ENCODE measurements at regions of chr2 and their contacts with region 1.

Region 1: GRCh38 chr2:131105156-131105949 is at the start of gene PLEKHB2:
- DNase-seq: peak; percentile 88 to 99 (median 94)
- ATAC-seq: peak; percentile 81
- H3K4me3 ChIP-seq: peak within 1 kb of the TSS; percentile 95
- H3K4me3 Mint-ChIP-seq: peak within 1 kb of the TSS; percentile 93 to 98 (median 96)
- H3K27ac ChIP-seq: peak within 1 kb of the TSS; percentile 98
- H3K27ac Mint-ChIP-seq: peak within 1 kb of the TSS; percentile 93 to 99 (median 96)
- H3K4me1 ChIP-seq: peaks cover 15 to 22% of the 10 kb centered on the region in 2 donors
- H3K4me1 Mint-ChIP-seq: peaks cover 31 to 70% (median 52%) of the 10 kb centered on the region in 7 donors
- H3K27me3 ChIP-seq: no peaks in the 10 kb centered on the region
- H3K27me3 Mint-ChIP-seq: no peaks in the 10 kb centered on the region
- total RNA-seq, gene PLEKHB2: 43.1 to 92.3 (median 55.8) TPM

Region 2: DNA sequence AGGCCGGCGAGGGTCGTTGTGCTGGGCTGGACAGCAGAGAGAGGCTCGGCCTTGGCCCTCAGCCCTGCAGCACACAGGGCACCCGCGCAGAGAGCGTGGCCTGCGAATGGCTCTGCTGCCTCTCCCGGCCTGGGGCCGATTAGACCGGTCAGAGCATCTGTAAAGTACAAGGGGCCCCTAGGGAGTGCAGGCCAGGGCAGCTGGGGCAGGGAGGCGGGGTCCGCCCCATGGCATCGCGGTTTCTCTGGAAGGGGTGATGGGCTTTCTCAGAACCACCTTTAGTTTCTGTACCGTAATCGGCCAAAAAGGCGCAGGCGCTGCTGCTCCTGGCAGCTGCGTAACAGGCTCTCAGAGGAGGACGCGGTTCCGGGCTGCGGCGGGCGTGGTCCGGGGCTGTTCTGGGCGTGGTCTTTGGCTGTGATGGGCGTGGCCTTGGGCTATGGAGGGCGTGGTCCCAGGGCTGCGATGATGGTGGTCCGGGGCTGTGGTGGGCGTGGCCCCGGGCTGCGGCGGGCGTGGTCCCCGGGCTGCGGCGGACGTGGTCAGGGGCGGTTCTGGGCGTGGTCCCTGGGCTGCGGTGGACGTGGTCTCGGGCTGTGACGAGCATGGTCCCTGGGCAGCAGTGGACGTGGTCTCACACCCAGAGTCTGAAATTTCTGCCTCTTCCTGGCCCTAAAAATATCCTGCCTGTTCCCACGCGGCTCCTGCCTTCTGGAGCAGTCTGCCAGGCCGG is 377.9 kb before region 1 on chr2:
- CTCF ChIA-PET with region 1: no interaction called
- POLR2A ChIA-PET with region 1: interaction called, 4 read pairs
- intact Hi-C with region 1: loop called in 1 of 2 experiments (anchors 5 kb)
- DNase-seq: peak; percentile 74 to 91 (median 85)
- ATAC-seq: peak; percentile 98
- H3K4me3 ChIP-seq: peak overlapping the region; percentile 86
- H3K4me3 Mint-ChIP-seq: peak overlapping the region; percentile 74 to 89 (median 86)
- H3K27ac ChIP-seq: peak overlapping the region; percentile 83
- H3K27ac Mint-ChIP-seq: peak overlapping the region; percentile 76 to 95 (median 91)
- H3K4me1 ChIP-seq: peaks cover 15 to 18% of the 10 kb centered on the region in 2 donors
- H3K4me1 Mint-ChIP-seq: peaks cover 0 to 17% (median 16%) of the 10 kb centered on the region in 7 donors
- H3K27me3 ChIP-seq: no peaks in the 10 kb centered on the region
- H3K27me3 Mint-ChIP-seq: peaks cover 0 to 13% (median 0%) of the 10 kb centered on the region in 5 donors

Region 3: DNA sequence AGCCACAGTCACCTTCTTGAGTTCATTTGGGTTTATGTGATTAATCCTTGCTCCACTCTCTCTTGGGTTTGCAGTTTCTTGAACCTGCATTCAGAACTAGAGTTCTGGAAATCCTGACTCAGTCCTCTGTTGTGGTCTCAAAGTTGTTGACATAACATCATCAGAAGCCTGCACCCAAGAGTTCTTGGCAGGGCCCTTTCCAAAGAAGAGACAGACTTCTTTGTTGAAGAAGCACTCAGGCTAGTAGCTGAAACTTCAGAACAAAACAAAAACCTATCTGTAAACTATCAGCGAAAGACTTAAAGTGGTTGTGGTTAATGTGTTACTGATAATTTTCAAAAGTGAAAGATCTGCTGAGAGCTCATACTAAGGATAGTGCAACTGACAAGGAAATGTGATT is 132.9 kb before region 1 on chr2:
- CTCF ChIA-PET with region 1: no interaction called
- POLR2A ChIA-PET with region 1: no interaction called
- intact Hi-C with region 1: loop called in 1 of 2 experiments (anchors 1 kb)
- DNase-seq: no peak
- ATAC-seq: no peak
- H3K4me3 ChIP-seq: no peak overlapping the region
- H3K4me3 Mint-ChIP-seq: peak overlapping the region in 1 of 10 donors; percentile 24
- H3K27ac ChIP-seq: no peak overlapping the region
- H3K27ac Mint-ChIP-seq: peak overlapping the region in 1 of 9 donors; percentile 4
- H3K4me1 ChIP-seq: peaks cover 0 to 5% of the 10 kb centered on the region in 2 donors
- H3K4me1 Mint-ChIP-seq: peaks cover 0 to 12% (median 0%) of the 10 kb centered on the region in 7 donors
- H3K27me3 ChIP-seq: no peaks in the 10 kb centered on the region
- H3K27me3 Mint-ChIP-seq: peaks cover 0 to 7% (median under 1%) of the 10 kb centered on the region in 5 donors

Region 4: GRCh38 chr2:131093006-131093695 is 12.2 kb before region 1 on chr2 and contains the start of gene FAM168B:
- CTCF ChIA-PET with region 1: interaction called, 4 read pairs
- POLR2A ChIA-PET with region 1: interaction called, 112 read pairs
- intact Hi-C with region 1: loop called (anchors 1 kb)
- DNase-seq: peak; percentile 82 to 96 (median 92)
- ATAC-seq: peak; percentile 92
- H3K4me3 ChIP-seq: peak within 1 kb of the TSS; percentile 81
- H3K4me3 Mint-ChIP-seq: peak within 1 kb of the TSS; percentile 82 to 98 (median 94)
- H3K27ac ChIP-seq: peak within 1 kb of the TSS; percentile 99
- H3K27ac Mint-ChIP-seq: peak within 1 kb of the TSS; percentile 88 to 97 (median 96)
- H3K4me1 ChIP-seq: peaks cover 0 to 12% of the 10 kb centered on the region in 2 donors
- H3K4me1 Mint-ChIP-seq: peaks cover 7 to 37% (median 24%) of the 10 kb centered on the region in 7 donors
- H3K27me3 ChIP-seq: no peaks in the 10 kb centered on the region
- H3K27me3 Mint-ChIP-seq: no peaks in the 10 kb centered on the region
- total RNA-seq, gene FAM168B: 50.5 to 82.9 (median 66.7) TPM

Region 5: DNA sequence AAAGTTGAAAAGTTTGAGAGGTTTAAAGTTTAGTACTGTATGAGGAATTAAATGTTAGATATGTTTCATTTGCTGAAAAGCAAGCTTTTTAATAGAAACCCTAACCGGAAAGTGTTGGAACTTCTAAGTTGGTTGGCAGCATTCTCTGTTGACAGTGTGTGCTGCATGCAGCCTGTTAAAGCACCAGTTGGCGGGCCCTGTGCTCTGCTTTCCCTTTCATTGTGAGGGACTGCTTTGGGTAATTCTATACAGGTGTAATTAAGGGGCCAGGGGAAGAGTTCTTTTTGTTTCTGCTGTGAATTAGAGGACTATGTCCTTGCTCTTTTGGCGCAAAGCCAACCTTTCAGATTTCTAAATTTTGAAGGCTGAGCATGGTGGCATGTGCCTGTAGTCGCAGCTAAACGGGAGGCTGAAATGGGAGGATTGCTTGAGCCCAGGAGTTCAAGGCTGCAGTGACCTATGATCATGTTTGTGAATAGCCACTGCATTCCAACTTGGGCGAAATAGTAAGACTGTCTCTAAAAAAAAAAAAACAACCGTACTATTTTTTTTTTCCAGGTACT is 19.9 kb after region 1 on chr2:
- CTCF ChIA-PET with region 1: no interaction called
- POLR2A ChIA-PET with region 1: no interaction called
- intact Hi-C with region 1: no loop called
- DNase-seq: no peak
- ATAC-seq: no peak
- H3K4me3 ChIP-seq: no peak overlapping the region
- H3K4me3 Mint-ChIP-seq: no peak overlapping the region
- H3K27ac ChIP-seq: no peak overlapping the region
- H3K27ac Mint-ChIP-seq: peak overlapping the region in 1 of 9 donors; percentile 14
- H3K4me1 ChIP-seq: no peaks in the 10 kb centered on the region
- H3K4me1 Mint-ChIP-seq: peaks cover 7 to 18% (median 13%) of the 10 kb centered on the region in 7 donors
- H3K27me3 ChIP-seq: no peaks in the 10 kb centered on the region
- H3K27me3 Mint-ChIP-seq: no peaks in the 10 kb centered on the region

Measured in naive thymus-derived CD4-positive, alpha-beta T cell (primary cell).